ENCODE measurements at regions of chr2 and their contacts with region 1.

Region 1: DNA sequence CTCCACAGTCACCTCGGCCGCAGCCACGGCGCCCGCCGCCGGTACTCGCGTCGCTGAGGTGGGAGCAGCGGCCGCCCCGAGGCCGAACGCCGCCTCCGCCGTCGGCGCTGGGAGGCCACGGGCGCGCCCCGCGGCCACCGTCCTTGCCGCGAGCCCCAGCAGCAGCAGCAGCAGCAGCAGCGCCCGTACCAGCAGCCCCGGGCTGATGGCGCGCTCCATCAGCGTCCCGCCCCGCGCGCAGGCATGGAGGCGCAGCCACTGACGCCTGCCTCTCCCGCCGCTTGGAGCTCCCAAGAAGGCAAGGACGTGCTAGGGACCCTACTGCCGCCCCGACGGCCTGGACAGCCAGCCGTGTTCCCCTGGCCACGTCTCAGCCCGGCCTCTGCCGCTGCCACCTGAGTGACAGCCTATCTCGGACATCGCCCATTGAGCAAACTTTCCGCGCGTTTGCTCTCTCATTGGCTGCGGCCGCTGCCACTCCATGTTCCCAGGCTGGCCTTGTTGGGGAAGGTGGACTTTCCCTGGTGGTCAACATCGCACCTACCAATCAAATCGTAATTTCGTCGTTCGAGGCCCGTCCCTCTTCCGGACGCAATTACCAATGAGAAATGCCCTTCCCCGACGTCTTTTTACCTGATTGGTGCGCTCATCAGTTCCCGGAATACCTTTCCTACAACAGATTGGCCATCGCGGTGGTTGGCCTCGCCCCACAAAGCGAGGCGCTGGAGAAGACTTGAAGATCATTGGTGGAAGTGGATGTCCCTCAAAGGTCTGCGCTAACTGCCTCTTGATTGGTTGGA is at the start of gene EIF2AK3:
- DNase-seq: peak; percentile 100
- H3K4me3 ChIP-seq: peak within 1 kb of the TSS; percentile 96
- H3K27ac ChIP-seq: peak within 1 kb of the TSS; percentile 86
- H3K4me1 ChIP-seq: peaks cover 51% of the 10 kb centered on the region
- CTCF ChIP-seq: no peak
- total RNA-seq, gene EIF2AK3: 49.4 and 52.7 TPM in 2 replicates

Region 2: DNA sequence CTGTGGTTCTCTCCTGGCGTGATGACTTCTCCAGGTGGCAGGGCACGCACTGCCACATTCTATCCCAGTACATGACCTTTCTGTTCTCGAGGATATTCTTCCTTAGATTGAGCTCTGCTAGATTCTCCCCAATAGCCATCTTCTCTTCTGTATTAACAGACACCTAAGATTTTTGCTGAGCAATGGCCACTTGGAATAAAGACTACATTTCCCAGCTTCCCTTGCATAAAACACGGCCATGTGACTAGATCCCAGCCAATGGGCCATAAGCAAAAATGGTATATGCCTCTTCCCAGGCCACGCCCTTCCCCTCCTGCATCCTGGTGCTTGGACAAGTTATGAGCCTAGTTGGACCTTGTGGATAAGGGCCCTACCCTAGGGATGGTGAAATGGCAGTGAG is 82.1 kb before region 1 on chr2:
- CTCF ChIA-PET with region 1: no interaction called
- POLR2A ChIA-PET with region 1: no interaction called
- intact Hi-C with region 1: no loop called
- DNase-seq: peak; percentile 41
- H3K4me3 ChIP-seq: no peak overlapping the region
- H3K27ac ChIP-seq: no peak overlapping the region
- H3K4me1 ChIP-seq: no peaks in the 10 kb centered on the region
- CTCF ChIP-seq: no peak

Region 3: DNA sequence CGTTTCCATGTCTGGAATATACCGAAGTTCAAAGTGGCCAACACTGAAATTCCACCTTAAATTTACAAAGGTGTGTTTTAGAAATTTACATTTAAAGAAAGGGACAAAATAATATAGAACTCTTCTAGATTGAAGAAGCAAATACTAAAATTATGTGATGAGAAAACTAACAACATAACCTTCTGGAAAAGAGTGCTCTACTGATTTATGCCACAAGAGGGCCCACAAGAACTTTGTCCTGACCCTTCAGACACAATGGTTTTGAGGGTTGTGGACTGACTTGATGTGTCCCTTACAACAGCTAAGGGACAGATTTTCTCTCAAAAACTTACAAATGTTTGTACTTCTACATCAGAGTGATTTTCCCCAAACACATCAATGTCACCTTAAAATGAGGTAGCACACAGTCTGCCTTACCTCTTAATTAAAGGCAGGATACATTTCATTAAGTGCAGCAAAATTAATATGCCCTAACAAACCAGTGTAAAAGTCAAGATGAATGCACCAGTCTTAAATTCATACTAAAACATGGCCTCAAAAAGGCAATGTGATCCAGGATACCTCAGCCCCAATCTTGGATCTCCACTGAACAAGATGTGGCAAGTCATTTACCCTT is 36.1 kb before region 1 on chr2:
- CTCF ChIA-PET with region 1: no interaction called
- POLR2A ChIA-PET with region 1: interaction called, 6 read pairs
- intact Hi-C with region 1: loop called (anchors 2 kb)
- DNase-seq: peak; percentile 84
- H3K4me3 ChIP-seq: no peak overlapping the region
- H3K27ac ChIP-seq: peak overlapping the region; percentile 32
- H3K4me1 ChIP-seq: peaks cover 25% of the 10 kb centered on the region
- CTCF ChIP-seq: peak; percentile 98

Region 4: DNA sequence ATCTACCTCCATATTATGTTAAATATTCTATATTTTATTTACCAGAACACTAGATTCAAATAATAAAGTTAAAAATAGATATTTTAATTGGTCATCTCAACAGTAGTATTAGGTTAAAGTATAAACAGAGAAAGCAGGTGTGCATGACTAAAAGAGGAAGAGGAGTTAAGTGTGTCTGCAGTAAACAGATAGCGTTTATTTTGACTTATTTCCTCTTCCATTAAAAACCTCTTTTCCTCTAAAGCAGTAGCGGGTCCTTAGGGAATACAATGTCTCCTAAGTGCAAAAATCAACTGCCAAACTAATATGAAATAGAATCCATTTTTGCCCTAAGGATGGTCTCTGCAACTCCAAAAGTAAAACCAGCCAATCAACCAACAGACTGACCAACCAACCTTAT is 27.7 kb before region 1 on chr2:
- CTCF ChIA-PET with region 1: no interaction called
- POLR2A ChIA-PET with region 1: interaction called, 6 read pairs
- intact Hi-C with region 1: loop called (anchors 1 kb)
- DNase-seq: peak; percentile 55
- H3K4me3 ChIP-seq: peak overlapping the region; percentile 55
- H3K27ac ChIP-seq: peak overlapping the region; percentile 99
- H3K4me1 ChIP-seq: peaks cover 93% of the 10 kb centered on the region
- CTCF ChIP-seq: no peak

Region 5: DNA sequence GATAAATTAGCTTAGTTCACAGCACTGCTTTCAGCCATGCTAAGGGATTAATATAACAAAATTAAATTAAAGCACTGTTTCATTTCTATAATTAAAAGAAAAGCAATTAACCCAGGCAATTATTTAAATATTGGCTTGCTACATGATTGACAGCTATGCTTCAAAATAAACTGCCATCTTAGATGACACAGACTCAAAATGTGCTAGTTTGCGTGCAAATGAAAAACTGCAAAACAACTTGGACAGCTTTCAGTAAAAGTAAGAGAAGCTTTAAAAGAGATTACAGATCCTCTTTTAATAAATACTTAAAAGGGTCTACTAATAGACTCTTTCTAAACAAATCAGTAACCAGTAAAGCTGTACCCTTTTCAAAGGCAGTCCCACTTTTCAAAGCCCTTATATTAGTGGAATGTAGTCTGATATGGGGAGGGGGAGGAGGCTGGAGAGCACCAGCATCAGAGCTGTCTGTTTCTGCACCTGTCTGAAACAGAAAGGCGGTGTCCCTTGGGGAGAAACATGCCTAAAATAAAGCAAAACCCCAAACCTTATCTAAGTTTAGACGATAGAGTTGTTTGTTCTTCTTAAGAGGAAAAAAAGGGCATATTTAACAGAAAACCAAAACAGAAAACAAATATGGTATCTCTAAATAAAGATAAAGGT is 20.8 kb before region 1 on chr2:
- CTCF ChIA-PET with region 1: interaction called, 5 read pairs
- POLR2A ChIA-PET with region 1: interaction called, 33 read pairs
- intact Hi-C with region 1: loop called (anchors 2 kb)
- DNase-seq: peak; percentile 92
- H3K4me3 ChIP-seq: peak overlapping the region; percentile 45
- H3K27ac ChIP-seq: peak overlapping the region; percentile 99
- H3K4me1 ChIP-seq: peaks cover 99% of the 10 kb centered on the region
- CTCF ChIP-seq: no peak

Region 6: GRCh38 chr2:88747990-88748389 is 120.7 kb after region 1 on chr2:
- CTCF ChIA-PET with region 1: no interaction called
- POLR2A ChIA-PET with region 1: no interaction called
- intact Hi-C with region 1: no loop called
- DNase-seq: peak; percentile 61
- H3K4me3 ChIP-seq: peak overlapping the region; percentile 11
- H3K27ac ChIP-seq: peak overlapping the region; percentile 96
- H3K4me1 ChIP-seq: peaks cover 63% of the 10 kb centered on the region
- CTCF ChIP-seq: 0 out of 2 replicates have a peak, but pooled peaks have one; percentile 16

Region 7: GRCh38 chr2:88765154-88765900 is 138.1 kb after region 1 on chr2:
- CTCF ChIA-PET with region 1: no interaction called
- POLR2A ChIA-PET with region 1: no interaction called
- intact Hi-C with region 1: loop called (anchors 5 kb)
- DNase-seq: peak; percentile 94
- H3K4me3 ChIP-seq: peak overlapping the region; percentile 78
- H3K27ac ChIP-seq: peak overlapping the region; percentile 86
- H3K4me1 ChIP-seq: peaks cover 33% of the 10 kb centered on the region
- CTCF ChIP-seq: 0 out of 2 replicates have a peak, but pooled peaks have one; percentile 15

Measured in OCI-LY7 (cell line).